SK-N-SH (cell line): ENCODE measurements at regions of chr2 and their contacts with region 1.

Region 1: DNA sequence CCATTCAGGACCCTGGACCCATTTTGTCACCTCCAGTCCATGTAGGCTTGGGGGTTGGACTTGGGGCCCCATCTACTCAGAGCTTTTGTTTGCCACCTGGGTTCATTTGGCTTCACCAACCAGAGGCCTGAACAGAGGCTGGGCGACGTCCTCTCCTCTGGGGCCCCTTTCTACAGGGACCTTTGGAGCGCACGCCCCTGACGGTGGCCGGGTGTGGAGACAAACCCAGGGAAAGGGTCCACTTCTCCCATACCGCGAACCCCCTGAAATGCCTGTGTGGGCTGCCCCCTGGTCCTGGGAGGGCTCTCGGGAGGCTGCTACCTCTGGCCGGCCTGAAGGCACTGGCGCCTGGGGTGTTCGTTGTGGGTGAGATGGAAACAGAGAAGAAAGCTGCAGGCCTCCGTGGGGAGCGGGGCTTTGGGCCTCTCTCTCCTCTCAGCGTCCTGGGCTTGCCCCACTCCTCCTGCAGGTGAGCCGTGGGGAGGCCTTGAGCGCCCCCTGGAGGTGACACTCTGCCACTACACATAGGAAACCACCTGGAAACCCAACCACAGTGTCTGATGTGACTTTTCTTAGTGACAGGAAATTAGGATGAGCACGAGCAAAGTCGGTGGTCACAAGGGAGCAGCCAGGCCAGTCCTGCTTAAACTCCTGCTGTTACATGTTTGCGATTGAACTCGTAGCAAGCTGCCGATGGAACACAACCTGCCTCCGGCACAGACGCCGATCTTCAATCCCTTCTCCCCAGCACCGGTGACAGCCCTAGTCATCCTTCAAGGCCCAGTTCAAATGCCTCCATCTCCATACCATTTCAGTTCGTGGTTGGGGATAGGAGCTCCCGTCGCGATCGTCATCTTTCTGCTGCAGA is 12.0 kb upstream of the NTSR2 start:
- DNase-seq: peak; percentile 90
- H3K4me3 ChIP-seq: no peak overlapping the region; a peak in 1 of 4 replicates
- H3K27ac ChIP-seq: no peak overlapping the region
- H3K4me1 ChIP-seq: peaks cover 0 to 19% of the 10 kb centered on the region in 2 experiments; a peak in 1 of 4 replicates
- H3K27me3 ChIP-seq: peaks cover 14% of the 10 kb centered on the region; the same call in 1 of the 2 replicates
- CTCF ChIP-seq: peak; percentile 93
- EP300 ChIP-seq: no peak
- RAD21 ChIP-seq: peak; percentile 76

Region 2: DNA sequence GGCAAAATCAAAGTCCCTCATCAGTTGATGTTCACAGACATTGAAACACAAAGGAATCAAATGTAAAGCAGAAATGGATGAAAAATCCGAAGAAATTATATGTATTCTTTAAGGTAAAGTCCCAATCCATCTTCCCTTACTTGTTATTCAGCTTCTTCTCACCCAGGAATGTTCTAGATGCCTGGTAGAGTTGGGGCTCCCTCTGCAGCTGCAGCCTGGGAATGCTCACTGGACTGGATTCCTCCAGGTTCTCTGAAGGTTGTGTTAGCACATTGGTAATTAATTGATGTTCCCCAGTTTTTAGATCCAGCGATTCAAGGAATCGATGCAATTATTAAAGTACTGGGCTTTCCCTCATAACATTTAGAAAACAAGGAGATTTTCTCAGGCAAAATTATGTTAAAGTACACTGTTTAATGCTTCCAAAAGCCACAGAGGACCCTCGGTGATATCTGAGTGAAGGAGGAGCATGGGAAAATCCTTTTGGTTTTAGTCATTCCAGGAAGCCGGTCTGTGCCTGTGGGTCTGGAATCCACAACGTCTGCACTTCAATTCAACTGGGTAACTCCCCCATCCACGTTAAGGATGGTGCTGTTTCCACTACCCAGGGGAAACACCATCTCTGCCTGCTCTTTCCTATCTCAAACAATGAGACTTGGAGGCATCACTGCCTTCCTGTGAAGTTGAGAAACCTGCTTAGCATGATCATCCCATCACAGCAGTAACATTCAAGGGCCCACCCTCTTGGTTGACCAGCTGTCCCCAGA is 33.9 kb before region 1 on chr2:
- CTCF ChIA-PET with region 1: interaction called, 28 read pairs
- POLR2A ChIA-PET with region 1: no interaction called
- DNase-seq: no peak
- H3K4me3 ChIP-seq: no peak overlapping the region
- H3K27ac ChIP-seq: no peak overlapping the region
- H3K4me1 ChIP-seq: no peaks in the 10 kb centered on the region
- H3K27me3 ChIP-seq: no peaks in the 10 kb centered on the region
- CTCF ChIP-seq: peak; percentile 51
- EP300 ChIP-seq: no peak
- RAD21 ChIP-seq: peak; percentile 29

Region 3: GRCh38 chr2:11663427-11663826 is 18.5 kb before region 1 on chr2:
- CTCF ChIA-PET with region 1: interaction called, 48 read pairs
- POLR2A ChIA-PET with region 1: no interaction called
- DNase-seq: no peak
- H3K4me3 ChIP-seq: no peak overlapping the region; a peak in 1 of 4 replicates
- H3K27ac ChIP-seq: no peak overlapping the region
- H3K4me1 ChIP-seq: no peaks in the 10 kb centered on the region
- H3K27me3 ChIP-seq: no peaks in the 10 kb centered on the region; the same call in 1 of the 2 replicates
- CTCF ChIP-seq: no peak
- EP300 ChIP-seq: no peak
- RAD21 ChIP-seq: no peak

Region 4: GRCh38 chr2:11914455-11914854 is 232.5 kb after region 1 on chr2:
- CTCF ChIA-PET with region 1: no interaction called
- POLR2A ChIA-PET with region 1: no interaction called
- DNase-seq: no peak
- H3K4me3 ChIP-seq: no peak overlapping the region
- H3K27ac ChIP-seq: no peak overlapping the region
- H3K4me1 ChIP-seq: no peaks in the 10 kb centered on the region
- H3K27me3 ChIP-seq: no peaks in the 10 kb centered on the region
- CTCF ChIP-seq: no peak
- EP300 ChIP-seq: no peak
- RAD21 ChIP-seq: no peak

Region 5: DNA sequence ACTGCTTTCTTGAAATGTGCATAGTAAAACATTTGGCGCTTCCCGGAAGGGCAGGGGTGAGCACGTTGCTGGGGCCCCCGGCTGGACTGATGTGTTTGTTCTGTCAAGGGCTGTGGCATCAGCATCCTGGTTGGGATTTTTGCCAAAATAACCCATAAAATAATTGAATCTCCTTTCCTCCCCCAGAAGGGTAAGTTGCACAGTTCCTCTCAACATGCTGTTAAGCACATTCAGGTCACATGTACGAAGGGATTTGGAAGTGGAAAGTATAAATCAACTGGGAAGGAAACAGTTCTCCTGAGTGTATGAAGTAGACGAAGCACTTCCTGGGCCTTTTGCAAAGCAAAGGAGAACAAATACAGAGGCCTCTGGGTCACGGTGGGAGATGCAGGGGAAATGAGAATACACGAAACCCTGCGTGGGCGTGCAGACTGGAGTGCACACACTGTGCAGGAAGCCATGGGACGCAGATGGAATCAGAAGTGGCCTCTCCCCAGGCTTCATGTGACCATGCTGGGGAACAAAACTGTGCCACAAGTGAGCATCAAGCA is 248.3 kb after region 1 on chr2:
- CTCF ChIA-PET with region 1: no interaction called
- POLR2A ChIA-PET with region 1: no interaction called
- DNase-seq: peak; percentile 32
- H3K4me3 ChIP-seq: no peak overlapping the region
- H3K27ac ChIP-seq: no peak overlapping the region
- H3K4me1 ChIP-seq: peaks cover 0 to 6% of the 10 kb centered on the region in 2 experiments; a peak in 1 of 4 replicates
- H3K27me3 ChIP-seq: no peaks in the 10 kb centered on the region
- CTCF ChIP-seq: no peak
- EP300 ChIP-seq: no peak
- RAD21 ChIP-seq: no peak